ENCODE measurements at regions of chr6 and their contacts with region 1.

Region 1: DNA sequence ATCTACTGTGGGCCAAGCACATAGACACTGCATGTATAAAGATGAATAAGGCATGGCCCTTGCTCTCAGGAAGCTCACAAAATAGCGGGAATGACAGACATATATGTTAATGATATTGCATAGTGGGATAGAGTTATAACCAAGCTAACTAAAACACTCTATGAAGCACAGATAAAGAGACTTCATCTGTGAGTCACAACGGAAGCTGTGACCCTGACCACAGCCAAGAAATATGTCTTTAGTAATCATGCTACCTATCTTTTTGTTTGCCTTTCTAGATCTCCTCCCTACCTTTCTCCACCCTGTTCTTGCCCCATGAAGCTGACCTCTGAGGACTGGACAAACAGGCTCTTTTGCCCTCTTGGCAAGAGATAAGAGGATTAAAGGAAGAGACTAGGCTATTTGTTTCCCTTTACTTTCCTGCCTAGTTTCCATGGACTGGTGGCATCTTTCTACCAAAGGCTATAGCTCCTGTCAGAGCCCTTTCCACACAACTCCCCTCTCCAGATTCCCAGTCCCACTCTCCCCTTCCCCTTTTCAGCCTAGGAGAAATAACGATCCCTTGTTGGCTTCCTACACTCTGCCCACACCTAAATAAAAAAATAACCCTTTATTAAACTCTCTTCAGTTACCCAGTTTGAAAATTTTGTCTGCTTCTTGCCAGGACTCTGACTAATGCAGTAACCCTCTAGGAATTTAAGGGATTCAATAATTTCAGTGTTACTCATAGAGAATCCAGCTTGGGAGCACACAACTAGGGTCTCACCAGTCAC is 504.9 kb upstream of the MARCKS start:
- DNase-seq: peak; percentile 90 to 96
- H3K4me3 ChIP-seq: no peak overlapping the region
- H3K4me3 Mint-ChIP-seq: peak overlapping the region; percentile 65
- H3K27ac Mint-ChIP-seq: peak overlapping the region; percentile 98
- H3K4me1 ChIP-seq: peaks cover 67% of the 10 kb centered on the region
- H3K4me1 Mint-ChIP-seq: peaks cover 67% of the 10 kb centered on the region
- H3K27me3 ChIP-seq: no peaks in the 10 kb centered on the region
- H3K27me3 Mint-ChIP-seq: no peaks in the 10 kb centered on the region
- CTCF ChIP-seq: no peak

Region 2: DNA sequence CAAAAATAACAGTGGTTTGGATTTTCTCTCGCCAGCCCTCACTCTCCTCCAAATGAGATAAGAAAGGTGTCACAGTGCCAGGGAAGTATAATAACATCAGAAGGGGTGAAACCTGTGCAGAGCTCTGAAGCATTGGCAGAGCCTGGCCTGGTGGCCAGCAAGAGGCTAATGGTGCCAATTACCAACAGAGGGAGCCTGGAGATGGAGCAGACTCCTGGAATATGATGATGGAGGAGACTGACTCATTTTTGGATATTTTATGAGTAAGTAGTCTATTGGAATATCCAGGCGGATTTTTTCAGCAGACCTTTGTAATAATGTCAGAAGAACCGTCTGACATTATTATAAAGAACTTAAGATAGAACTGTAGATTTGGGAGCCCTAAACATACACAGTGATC is 62.3 kb after region 1 on chr6:
- CTCF ChIA-PET with region 1: no interaction called
- POLR2A ChIA-PET with region 1: no interaction called
- intact Hi-C with region 1: loop called (anchors 2 kb)
- DNase-seq: peak; percentile 39 to 45
- H3K4me3 ChIP-seq: no peak overlapping the region
- H3K4me3 Mint-ChIP-seq: no peak overlapping the region
- H3K27ac Mint-ChIP-seq: no peak overlapping the region
- H3K4me1 ChIP-seq: peaks cover 8% of the 10 kb centered on the region; the same call in 1 of the 2 replicates
- H3K4me1 Mint-ChIP-seq: peaks cover 13% of the 10 kb centered on the region
- H3K27me3 ChIP-seq: no peaks in the 10 kb centered on the region
- H3K27me3 Mint-ChIP-seq: no peaks in the 10 kb centered on the region
- CTCF ChIP-seq: peak in 1 of 2 experiments; percentile 50

Region 3: GRCh38 chr6:113433335-113433991 is 81.2 kb after region 1 on chr6:
- CTCF ChIA-PET with region 1: no interaction called
- POLR2A ChIA-PET with region 1: no interaction called
- intact Hi-C with region 1: loop called (anchors 1 kb)
- DNase-seq: peak; percentile 76 to 78
- H3K4me3 ChIP-seq: no peak overlapping the region
- H3K4me3 Mint-ChIP-seq: peak overlapping the region; percentile 37
- H3K27ac Mint-ChIP-seq: peak overlapping the region; percentile 52
- H3K4me1 ChIP-seq: peaks cover 19% of the 10 kb centered on the region
- H3K4me1 Mint-ChIP-seq: peaks cover 15% of the 10 kb centered on the region
- H3K27me3 ChIP-seq: no peaks in the 10 kb centered on the region
- H3K27me3 Mint-ChIP-seq: no peaks in the 10 kb centered on the region
- CTCF ChIP-seq: no peak

Region 4: GRCh38 chr6:113529196-113529595 is 177.0 kb after region 1 on chr6:
- CTCF ChIA-PET with region 1: no interaction called
- POLR2A ChIA-PET with region 1: no interaction called
- intact Hi-C with region 1: loop called (anchors 5 kb)
- DNase-seq: no peak
- H3K4me3 ChIP-seq: no peak overlapping the region
- H3K4me3 Mint-ChIP-seq: no peak overlapping the region
- H3K27ac Mint-ChIP-seq: no peak overlapping the region
- H3K4me1 ChIP-seq: peaks cover 21% of the 10 kb centered on the region
- H3K4me1 Mint-ChIP-seq: peaks cover 19% of the 10 kb centered on the region
- H3K27me3 ChIP-seq: no peaks in the 10 kb centered on the region
- H3K27me3 Mint-ChIP-seq: no peaks in the 10 kb centered on the region
- CTCF ChIP-seq: no peak

Region 5: GRCh38 chr6:113719056-113719455 is 366.8 kb after region 1 on chr6:
- CTCF ChIA-PET with region 1: no interaction called
- POLR2A ChIA-PET with region 1: no interaction called
- intact Hi-C with region 1: loop called (anchors 1 kb)
- DNase-seq: peak; percentile 68 to 77
- H3K4me3 ChIP-seq: no peak overlapping the region
- H3K4me3 Mint-ChIP-seq: no peak overlapping the region
- H3K27ac Mint-ChIP-seq: peak overlapping the region; percentile 65
- H3K4me1 ChIP-seq: peaks cover 18% of the 10 kb centered on the region
- H3K4me1 Mint-ChIP-seq: peaks cover 25% of the 10 kb centered on the region
- H3K27me3 ChIP-seq: no peaks in the 10 kb centered on the region
- H3K27me3 Mint-ChIP-seq: no peaks in the 10 kb centered on the region
- CTCF ChIP-seq: no peak

Region 6: DNA sequence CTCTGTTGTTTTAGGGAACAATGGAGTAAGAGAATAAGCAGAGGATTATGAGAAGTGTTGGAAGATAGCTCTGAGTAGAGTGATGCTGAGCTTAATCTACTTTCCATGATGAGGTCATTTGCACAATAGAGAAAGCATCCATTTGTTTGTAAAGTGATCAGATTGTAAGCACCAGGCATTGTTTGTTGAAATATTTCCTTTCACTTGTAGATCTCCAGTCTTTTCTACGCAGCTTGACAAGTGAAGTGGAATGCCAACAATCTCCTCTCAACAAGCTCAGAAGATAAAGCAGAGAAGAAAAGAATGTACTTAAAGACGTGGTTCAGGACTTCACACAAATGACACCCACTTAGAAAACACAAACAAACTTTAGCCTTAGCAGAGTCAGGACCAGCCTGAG is 424.8 kb after region 1 on chr6:
- CTCF ChIA-PET with region 1: no interaction called
- POLR2A ChIA-PET with region 1: no interaction called
- intact Hi-C with region 1: loop called (anchors 5 kb)
- DNase-seq: peak in 1 of 2 experiments; percentile 37
- H3K4me3 ChIP-seq: no peak overlapping the region
- H3K4me3 Mint-ChIP-seq: peak overlapping the region; percentile 69
- H3K27ac Mint-ChIP-seq: peak overlapping the region; percentile 93
- H3K4me1 ChIP-seq: peaks cover 38% of the 10 kb centered on the region
- H3K4me1 Mint-ChIP-seq: peaks cover 23% of the 10 kb centered on the region
- H3K27me3 ChIP-seq: no peaks in the 10 kb centered on the region
- H3K27me3 Mint-ChIP-seq: no peaks in the 10 kb centered on the region
- CTCF ChIP-seq: no peak

Measured in Caco-2 (cell line).